CD4-positive, alpha-beta T cell (primary cell): ENCODE measurements at regions of chr4 and their contacts with region 1.

Region 1: DNA sequence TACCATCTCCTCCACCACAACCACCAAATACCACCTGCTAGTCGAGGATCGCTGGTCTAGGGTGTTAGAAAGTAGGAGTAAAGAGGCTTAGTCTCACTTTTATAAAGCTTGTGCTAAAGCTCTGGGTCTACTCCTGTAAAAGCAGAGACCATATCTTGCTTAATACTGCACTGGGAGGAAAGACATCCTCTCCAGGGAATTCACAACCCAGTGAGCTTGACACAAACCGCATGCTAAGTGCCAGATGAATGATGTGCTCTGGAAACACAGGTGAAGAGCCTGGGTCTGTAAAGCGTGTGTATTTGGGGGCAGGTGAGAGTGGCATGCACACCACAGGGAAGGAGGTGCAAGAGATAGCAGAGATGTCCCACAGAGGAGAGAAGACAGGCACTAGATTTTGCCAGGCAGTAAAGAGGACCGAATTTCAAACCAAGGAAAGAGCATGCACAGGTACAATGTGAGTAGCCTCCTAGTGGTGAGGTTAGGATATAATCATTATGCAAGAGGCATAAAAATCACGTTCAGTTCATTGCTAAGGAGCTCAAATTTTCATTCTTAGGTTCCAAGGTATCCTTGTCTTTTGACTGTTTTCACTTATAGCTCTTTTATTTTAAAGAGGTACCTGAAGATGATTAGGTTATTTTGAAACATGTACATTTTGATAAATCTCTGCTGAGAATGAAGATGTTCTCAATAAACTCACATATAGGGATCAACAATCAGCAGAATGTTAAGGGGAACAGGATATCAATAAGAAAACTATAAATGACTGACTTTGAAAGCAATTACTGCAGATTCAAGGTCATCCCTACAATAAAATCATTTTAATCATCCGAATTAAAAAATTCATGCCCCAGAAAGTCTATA is 20.7 kb downstream of the TAPT1 start:
- DNase-seq: peak in 3 of 14 experiments; percentile 37 to 54 (median 48)
- ATAC-seq: peak; percentile 89
- H3K4me3 ChIP-seq: no peak overlapping the region
- H3K4me3 Mint-ChIP-seq: no peak overlapping the region
- H3K27ac ChIP-seq: no peak overlapping the region
- H3K27ac Mint-ChIP-seq: peak overlapping the region; percentile 24
- H3K4me1 ChIP-seq: peaks cover 12% of the 10 kb centered on the region
- H3K4me1 Mint-ChIP-seq: peaks cover 67% of the 10 kb centered on the region
- H3K27me3 ChIP-seq: no peaks in the 10 kb centered on the region
- H3K27me3 Mint-ChIP-seq: no peaks in the 10 kb centered on the region
- CTCF ChIP-seq: peak; percentile 77

Region 2: GRCh38 chr4:15636835-15637234 is 568.7 kb before region 1 on chr4:
- CTCF ChIA-PET with region 1: no interaction called
- POLR2A ChIA-PET with region 1: no interaction called
- intact Hi-C with region 1: no loop called
- DNase-seq: no peak
- ATAC-seq: no peak
- H3K4me3 ChIP-seq: no peak overlapping the region
- H3K4me3 Mint-ChIP-seq: no peak overlapping the region
- H3K27ac ChIP-seq: no peak overlapping the region
- H3K27ac Mint-ChIP-seq: no peak overlapping the region
- H3K4me1 ChIP-seq: no peaks in the 10 kb centered on the region
- H3K4me1 Mint-ChIP-seq: peaks cover 10% of the 10 kb centered on the region
- H3K27me3 ChIP-seq: no peaks in the 10 kb centered on the region
- H3K27me3 Mint-ChIP-seq: no peaks in the 10 kb centered on the region
- CTCF ChIP-seq: no peak

Region 3: DNA sequence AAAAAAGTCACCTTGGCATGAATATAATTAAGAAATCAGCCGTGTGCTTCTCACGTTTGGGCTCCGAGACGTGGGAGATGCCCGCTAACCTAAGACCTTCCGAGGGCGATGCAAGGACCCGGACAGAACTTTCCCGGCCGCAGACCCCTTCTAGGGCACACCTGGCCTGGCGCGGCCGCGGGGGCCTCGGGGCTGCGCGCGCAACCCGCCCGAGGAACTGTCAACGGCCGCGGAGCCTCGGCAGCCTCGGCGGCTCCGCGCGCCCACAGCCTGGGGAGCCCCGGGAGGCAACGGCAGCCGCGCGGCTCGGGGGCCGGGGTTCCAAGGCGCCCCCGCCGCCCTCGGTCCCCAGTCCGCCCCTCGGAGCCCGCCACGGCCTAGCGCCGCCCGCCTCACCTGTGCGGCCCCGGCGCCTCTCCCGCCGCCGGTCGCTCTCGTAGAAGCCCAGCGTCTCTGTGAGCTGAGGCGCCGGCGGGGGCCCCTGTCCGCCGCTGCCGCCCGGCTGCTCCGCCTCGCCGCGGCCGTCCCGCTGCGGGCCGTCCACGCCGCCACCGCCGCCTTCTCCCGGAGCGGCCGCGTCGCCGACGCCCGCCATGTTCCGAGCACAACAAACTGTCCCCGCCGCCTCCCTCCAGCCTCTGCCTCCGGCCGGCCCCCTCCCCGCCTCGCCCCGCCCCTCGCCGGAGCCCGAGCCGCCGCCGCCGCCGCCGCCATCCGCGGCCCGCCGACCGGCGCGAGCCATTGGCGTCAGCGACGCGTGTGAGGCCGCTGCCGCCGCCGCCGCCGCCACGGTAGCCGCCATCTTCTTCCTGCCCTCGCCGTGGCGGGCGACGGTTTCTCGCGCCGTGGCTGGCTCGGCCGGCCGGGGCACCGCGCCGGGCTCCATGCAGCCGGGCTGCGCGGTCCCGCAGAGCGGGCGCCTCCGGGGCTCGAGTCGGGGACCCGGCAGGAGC is 20.6 kb after region 1 on chr4 and contains the start of gene TAPT1:
- CTCF ChIA-PET with region 1: interaction called, 11 read pairs
- POLR2A ChIA-PET with region 1: interaction called, 5 read pairs
- intact Hi-C with region 1: loop called in 1 of 2 experiments (anchors 2 kb)
- DNase-seq: peak; percentile 45 to 89 (median 71)
- ATAC-seq: peak; percentile 52
- H3K4me3 ChIP-seq: peak within 1 kb of the TSS; percentile 80
- H3K4me3 Mint-ChIP-seq: peak within 1 kb of the TSS; percentile 97
- H3K27ac ChIP-seq: peak within 1 kb of the TSS; percentile 71 to 73
- H3K27ac Mint-ChIP-seq: peak within 1 kb of the TSS; percentile 97
- H3K4me1 ChIP-seq: peaks cover 21% of the 10 kb centered on the region
- H3K4me1 Mint-ChIP-seq: peaks cover 65% of the 10 kb centered on the region
- H3K27me3 ChIP-seq: no peaks in the 10 kb centered on the region
- H3K27me3 Mint-ChIP-seq: no peaks in the 10 kb centered on the region
- CTCF ChIP-seq: no peak
- total RNA-seq, gene TAPT1: 70.6 to 77.1 TPM

Region 4: GRCh38 chr4:16240300-16240699 is 34.8 kb after region 1 on chr4:
- CTCF ChIA-PET with region 1: interaction called, 6 read pairs
- POLR2A ChIA-PET with region 1: no interaction called
- intact Hi-C with region 1: loop called in 1 of 2 experiments (anchors 5 kb)
- DNase-seq: no peak
- ATAC-seq: no peak
- H3K4me3 ChIP-seq: no peak overlapping the region
- H3K4me3 Mint-ChIP-seq: no peak overlapping the region
- H3K27ac ChIP-seq: no peak overlapping the region
- H3K27ac Mint-ChIP-seq: no peak overlapping the region
- H3K4me1 ChIP-seq: no peaks in the 10 kb centered on the region
- H3K4me1 Mint-ChIP-seq: no peaks in the 10 kb centered on the region
- H3K27me3 ChIP-seq: no peaks in the 10 kb centered on the region
- H3K27me3 Mint-ChIP-seq: no peaks in the 10 kb centered on the region
- CTCF ChIP-seq: no peak

Region 5: GRCh38 chr4:16264798-16265197 is 59.3 kb after region 1 on chr4:
- CTCF ChIA-PET with region 1: no interaction called
- POLR2A ChIA-PET with region 1: no interaction called
- intact Hi-C with region 1: loop called in 1 of 2 experiments (anchors 10 kb)
- DNase-seq: peak in 3 of 14 experiments; percentile 57 to 65 (median 64)
- ATAC-seq: no peak
- H3K4me3 ChIP-seq: no peak overlapping the region
- H3K4me3 Mint-ChIP-seq: no peak overlapping the region
- H3K27ac ChIP-seq: no peak overlapping the region
- H3K27ac Mint-ChIP-seq: no peak overlapping the region
- H3K4me1 ChIP-seq: no peaks in the 10 kb centered on the region
- H3K4me1 Mint-ChIP-seq: peaks cover 12% of the 10 kb centered on the region
- H3K27me3 ChIP-seq: no peaks in the 10 kb centered on the region
- H3K27me3 Mint-ChIP-seq: no peaks in the 10 kb centered on the region
- CTCF ChIP-seq: peak; percentile 69